ENCODE measurements at regions of chr1 and their contacts with region 1.

Region 1: GRCh38 chr1:159924981-159925712 is at the start of gene TAGLN2:
- DNase-seq: peak; percentile 90
- ATAC-seq: peak; percentile 67
- H3K4me3 Mint-ChIP-seq: peak within 1 kb of the TSS; percentile 97
- H3K27ac Mint-ChIP-seq: peak within 1 kb of the TSS; percentile 98
- H3K4me1 Mint-ChIP-seq: peaks cover 40% of the 10 kb centered on the region
- H3K27me3 Mint-ChIP-seq: no peaks in the 10 kb centered on the region
- total RNA-seq, gene TAGLN2: 384 to 388 TPM

Region 2: DNA sequence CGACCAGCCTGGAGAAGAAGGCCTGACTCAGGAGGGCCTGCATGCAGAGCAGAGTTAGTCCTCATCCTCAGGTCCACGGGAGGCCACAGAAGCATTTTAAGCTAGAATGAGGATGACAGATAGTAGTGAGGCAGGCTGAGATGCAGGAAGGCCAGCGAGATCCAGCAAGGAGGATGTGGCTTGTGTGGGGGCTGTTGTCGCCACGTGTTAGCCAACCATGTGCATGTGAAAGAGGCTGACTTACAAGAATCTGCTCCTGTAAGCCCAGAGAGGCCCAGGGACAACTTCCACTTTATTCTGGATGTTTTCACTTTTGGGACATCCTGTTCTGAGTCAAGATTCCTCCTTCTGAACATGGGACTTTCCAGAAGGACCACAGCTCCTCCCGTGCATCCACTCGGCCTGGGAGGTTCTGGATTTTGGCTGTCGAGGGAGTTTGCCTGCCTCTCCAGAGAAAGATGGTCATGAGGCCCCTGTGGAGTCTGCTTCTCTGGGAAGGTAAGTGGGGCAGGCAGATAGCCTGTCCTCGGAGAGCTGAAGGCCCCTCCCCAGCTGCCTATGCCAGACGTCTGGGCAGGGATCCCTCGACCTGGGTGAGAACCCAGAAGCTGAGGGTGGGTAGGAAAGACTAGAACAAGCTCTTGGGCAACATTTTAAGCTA is 98.6 kb before region 1 on chr1 and contains the start of gene SLAMF8:
- POLR2A ChIA-PET with region 1: interaction called, 24 read pairs
- DNase-seq: peak; percentile 72
- ATAC-seq: peak; percentile 85
- H3K4me3 Mint-ChIP-seq: peak within 1 kb of the TSS; percentile 36
- H3K27ac Mint-ChIP-seq: peak within 1 kb of the TSS; percentile 53
- H3K4me1 Mint-ChIP-seq: peaks cover 52% of the 10 kb centered on the region
- H3K27me3 Mint-ChIP-seq: peaks cover 55% of the 10 kb centered on the region
- total RNA-seq, gene SLAMF8: 1.1 to 1.8 TPM

Region 3: GRCh38 chr1:159891275-159892157 is 33.6 kb before region 1 on chr1:
- POLR2A ChIA-PET with region 1: interaction called, 24 read pairs
- DNase-seq: peak; percentile 77
- ATAC-seq: peak; percentile 83
- H3K4me3 Mint-ChIP-seq: no peak overlapping the region
- H3K27ac Mint-ChIP-seq: no peak overlapping the region
- H3K4me1 Mint-ChIP-seq: peaks cover 14% of the 10 kb centered on the region
- H3K27me3 Mint-ChIP-seq: peaks cover 6% of the 10 kb centered on the region

Region 4: DNA sequence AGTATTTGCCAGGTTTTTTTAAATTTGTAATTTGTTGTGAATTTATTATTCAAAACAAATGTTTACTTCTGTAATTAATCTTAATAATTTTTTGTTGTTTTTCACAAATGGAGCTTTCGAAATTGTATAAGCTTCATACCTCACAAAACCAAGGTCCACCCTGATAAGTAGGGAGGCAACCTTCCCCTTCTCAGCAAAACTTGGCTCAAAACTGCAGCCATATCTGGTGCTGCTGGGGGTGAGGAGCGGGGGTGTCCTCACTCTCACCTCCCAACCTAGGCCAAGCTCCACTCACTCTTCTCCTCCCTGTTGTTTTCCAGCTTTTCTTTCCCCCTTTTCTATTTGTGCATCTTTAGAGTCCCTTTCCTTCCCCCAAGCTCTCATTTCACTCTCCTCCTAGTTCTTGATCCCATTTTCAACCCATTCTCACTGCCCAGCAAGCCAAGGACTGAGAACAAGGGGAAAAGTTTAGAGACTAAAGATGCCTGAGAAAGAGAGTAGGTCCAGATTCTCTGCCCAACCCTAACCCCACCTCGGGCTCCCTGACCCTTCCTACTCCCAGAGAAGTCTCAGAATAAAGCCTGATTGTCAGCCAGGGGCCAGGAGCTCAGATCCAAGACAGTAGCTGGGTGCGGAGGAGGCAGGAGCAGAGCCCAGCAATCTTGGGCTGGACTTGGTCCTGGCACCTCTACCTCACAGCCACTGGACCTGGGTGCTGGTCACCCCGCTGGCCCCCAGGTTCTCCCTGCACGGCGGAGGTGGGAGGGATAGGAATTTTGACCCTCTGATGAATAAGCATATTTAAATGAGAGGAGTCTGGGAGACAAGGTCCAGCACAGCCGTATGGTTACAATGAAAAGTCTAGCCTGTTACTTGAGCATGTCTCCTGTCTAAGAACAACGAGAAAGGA is 16.9 kb before region 1 on chr1:
- POLR2A ChIA-PET with region 1: interaction called, 26 read pairs
- DNase-seq: no peak
- ATAC-seq: no peak
- H3K4me3 Mint-ChIP-seq: no peak overlapping the region
- H3K27ac Mint-ChIP-seq: peak overlapping the region; percentile 6
- H3K4me1 Mint-ChIP-seq: peaks cover 40% of the 10 kb centered on the region
- H3K27me3 Mint-ChIP-seq: no peaks in the 10 kb centered on the region

Region 5: GRCh38 chr1:159935719-159936272 is 10.6 kb after region 1 on chr1:
- POLR2A ChIA-PET with region 1: interaction called, 15 read pairs
- DNase-seq: no peak
- ATAC-seq: no peak
- H3K4me3 Mint-ChIP-seq: no peak overlapping the region
- H3K27ac Mint-ChIP-seq: no peak overlapping the region
- H3K4me1 Mint-ChIP-seq: peaks cover 4% of the 10 kb centered on the region
- H3K27me3 Mint-ChIP-seq: peaks cover 26% of the 10 kb centered on the region

Region 6: DNA sequence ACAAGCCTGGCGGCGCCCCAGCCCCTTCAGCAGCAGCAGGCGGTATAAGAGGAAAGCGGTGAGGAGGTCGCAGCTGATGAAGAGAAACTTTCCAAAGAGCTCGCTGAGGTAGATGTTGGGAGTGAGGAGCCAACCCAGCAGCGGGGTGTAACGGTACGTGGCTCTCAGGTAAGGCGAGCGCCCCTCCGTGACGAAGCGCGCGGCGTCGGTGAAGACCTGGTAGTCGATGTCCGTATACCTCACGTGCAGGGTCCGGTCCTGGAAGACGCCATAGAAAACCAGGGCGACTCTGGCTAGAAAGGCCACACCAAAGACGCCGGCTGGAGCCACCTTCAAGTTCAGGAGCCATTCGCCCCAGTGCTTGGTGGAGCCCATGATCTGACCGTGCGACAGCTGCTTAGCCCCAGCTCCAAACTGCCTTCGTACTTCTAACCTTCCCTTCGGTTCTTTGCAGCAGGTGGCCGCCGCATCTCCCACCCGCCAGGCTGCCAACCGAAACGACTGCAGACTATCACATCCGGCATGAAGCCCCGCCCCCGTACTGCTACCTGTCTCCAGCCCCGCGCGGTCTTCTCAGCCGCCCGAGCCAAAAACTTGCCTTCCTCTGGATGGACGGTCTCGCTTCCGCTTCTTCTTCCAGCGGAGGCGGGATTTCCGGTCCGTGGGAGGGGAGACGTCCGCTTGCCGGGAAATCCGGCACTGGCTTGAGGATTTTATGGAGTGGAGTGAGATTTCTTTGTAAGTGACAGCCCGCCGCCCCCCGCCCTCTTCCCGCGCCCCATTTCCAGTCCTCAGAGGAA is 106.4 kb after region 1 on chr1 and contains the start of gene PIGM:
- POLR2A ChIA-PET with region 1: interaction called, 22 read pairs
- DNase-seq: peak; percentile 90
- ATAC-seq: peak; percentile 99
- H3K4me3 Mint-ChIP-seq: peak within 1 kb of the TSS; percentile 94
- H3K27ac Mint-ChIP-seq: peak within 1 kb of the TSS; percentile 94
- H3K4me1 Mint-ChIP-seq: peaks cover 25% of the 10 kb centered on the region
- H3K27me3 Mint-ChIP-seq: no peaks in the 10 kb centered on the region
- total RNA-seq, gene PIGM: 7.2 to 7.3 TPM

Region 7: DNA sequence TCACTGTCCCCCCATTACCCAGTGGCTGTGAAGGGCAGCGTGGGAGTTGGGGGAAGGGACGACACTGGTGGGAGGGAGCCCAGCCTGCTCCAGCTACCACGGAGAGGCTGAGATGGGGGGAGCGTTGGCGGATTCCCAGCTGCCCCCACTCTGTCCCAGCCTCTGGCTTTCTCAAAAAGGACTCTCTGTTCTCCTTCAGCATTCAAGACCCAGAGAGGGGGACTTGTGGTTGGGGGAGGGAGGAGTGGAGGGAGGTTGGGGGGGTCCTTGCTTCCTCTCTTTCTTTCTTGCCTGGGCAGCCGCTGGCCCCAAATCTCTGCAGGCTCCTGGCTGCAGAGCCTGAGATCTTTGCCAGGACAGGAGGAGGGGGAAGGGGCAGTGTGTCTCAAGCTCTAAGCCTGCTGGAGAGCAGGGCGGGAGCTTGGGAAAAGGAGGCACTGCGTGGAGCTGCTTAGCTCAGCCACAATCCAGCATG is 192.6 kb after region 1 on chr1:
- POLR2A ChIA-PET with region 1: no interaction called
- DNase-seq: no peak
- ATAC-seq: no peak
- H3K4me3 Mint-ChIP-seq: no peak overlapping the region
- H3K27ac Mint-ChIP-seq: no peak overlapping the region
- H3K4me1 Mint-ChIP-seq: no peaks in the 10 kb centered on the region
- H3K27me3 Mint-ChIP-seq: peaks cover 14% of the 10 kb centered on the region